B cell (primary cell): ENCODE measurements at regions of chr15 and their contacts with region 1.

Region 1: DNA sequence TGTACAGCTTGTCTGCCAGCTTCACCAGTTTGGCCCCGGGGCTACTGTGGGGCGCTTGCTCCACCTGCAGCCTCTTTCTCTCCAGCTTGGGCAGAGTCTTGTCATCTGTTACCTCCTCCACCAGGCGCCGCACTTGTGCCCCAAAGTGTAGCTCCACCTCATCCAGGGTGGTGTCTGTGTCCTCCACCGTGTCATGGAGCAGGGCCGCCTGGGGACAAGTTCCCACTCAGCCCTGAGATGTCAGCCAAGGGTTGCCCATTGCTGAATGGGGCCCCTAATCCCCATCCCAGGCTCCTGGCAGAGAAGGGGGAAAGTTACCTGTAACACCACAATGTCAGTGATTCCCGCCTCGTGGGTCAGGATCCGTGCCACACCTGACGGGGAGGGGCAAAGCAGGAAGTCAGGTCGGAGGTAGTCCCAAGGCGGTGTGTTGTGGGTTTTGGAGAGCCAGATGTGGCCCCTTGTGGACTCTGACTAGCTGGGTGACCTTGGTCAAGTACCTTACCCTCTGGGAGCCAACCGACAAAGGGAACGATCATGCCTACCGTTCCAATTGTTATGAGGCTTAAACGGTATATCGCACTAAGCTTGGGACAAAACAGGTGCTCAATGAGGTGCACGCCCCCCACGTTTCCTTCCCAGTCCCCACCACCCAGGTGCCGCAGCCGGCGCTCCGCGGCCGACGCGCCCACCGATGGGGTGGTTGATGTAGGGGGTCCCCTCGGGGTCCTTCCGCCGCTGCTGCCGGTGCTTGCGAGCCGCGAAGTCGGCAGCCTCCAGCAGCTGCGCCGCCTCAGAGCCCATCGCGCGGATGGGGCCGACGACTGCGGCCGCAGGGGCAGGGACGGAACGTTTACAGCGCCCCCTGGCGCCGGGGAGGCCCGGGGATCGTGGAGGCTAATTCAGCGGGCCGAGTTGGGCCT is at the start of gene HDDC3:
- DNase-seq: peak; percentile 92
- ATAC-seq: peak; percentile 52
- H3K4me3 ChIP-seq: peak within 1 kb of the TSS; percentile 72 to 97 (median 86)
- H3K4me3 Mint-ChIP-seq: peak within 1 kb of the TSS; percentile 98
- H3K27ac ChIP-seq: peak within 1 kb of the TSS; percentile 93 to 94
- H3K27ac Mint-ChIP-seq: peak within 1 kb of the TSS; percentile 99
- H3K4me1 ChIP-seq: peaks cover 42 to 64% of the 10 kb centered on the region in 2 donors
- H3K4me1 Mint-ChIP-seq: peaks cover 52% of the 10 kb centered on the region
- H3K27me3 ChIP-seq: no peaks in the 10 kb centered on the region
- H3K27me3 Mint-ChIP-seq: no peaks in the 10 kb centered on the region
- CTCF ChIP-seq: peak; percentile 91
- total RNA-seq, gene HDDC3: 23.4 and 23.9 TPM in 2 replicates

Region 2: DNA sequence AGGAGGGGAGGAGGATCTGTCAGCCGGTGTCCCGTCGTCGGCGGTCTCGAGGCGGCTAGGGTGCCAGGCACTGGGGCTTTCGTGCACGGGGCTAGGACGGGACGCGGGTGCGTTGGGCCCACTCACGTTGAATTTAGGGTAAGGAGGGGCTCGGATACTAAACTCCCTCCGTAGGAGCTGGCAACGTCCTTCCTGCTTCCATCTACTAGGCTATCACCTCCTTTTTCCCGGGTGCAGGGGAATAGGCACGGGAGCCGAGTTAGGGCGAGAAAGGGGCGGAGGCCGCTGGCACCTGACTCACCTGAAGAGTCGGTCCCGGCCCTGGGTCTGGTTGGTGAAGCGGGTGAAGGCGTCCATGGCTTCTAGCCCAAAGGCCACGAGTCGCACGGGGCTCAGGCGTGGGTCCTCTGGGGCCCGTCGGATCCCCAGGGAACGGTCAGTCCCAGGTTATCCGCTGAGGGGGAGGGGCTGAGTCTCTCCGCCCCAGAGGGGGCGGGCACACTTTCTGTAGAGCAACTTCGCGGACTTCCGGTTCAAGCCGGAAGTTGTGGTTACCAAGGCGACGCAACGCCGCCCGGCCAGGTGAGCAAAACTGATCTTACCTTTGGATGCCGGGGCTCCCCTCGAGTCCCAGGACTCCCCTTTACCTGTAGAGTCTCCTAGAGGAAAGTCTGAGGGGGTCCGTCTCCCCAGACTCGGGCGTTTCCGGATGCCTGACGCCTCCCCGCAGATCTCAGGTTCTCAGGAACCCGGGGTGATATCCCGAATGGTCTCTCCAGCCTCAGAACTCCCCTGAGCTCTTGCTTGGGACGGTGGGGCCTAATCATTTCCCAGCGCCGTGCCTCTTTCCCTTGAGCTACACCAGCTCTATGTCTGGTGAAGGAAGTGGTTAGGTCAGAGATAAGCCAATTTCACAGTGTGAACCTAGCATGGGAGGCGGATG is 1241.5 kb before region 1 on chr15 and contains the starts of genes PEX11A and WDR93:
- CTCF ChIA-PET with region 1: no interaction called
- POLR2A ChIA-PET with region 1: no interaction called
- intact Hi-C with region 1: loop called (anchors 10 kb)
- DNase-seq: peak; percentile 86
- ATAC-seq: peak; percentile 95
- H3K4me3 ChIP-seq: peak within 1 kb of the TSS; percentile 69 to 92 (median 86)
- H3K4me3 Mint-ChIP-seq: peak within 1 kb of the TSS; percentile 92
- H3K27ac ChIP-seq: peak within 1 kb of the TSS in 1 of 2 donors; percentile 1
- H3K27ac Mint-ChIP-seq: peak within 1 kb of the TSS; percentile 76
- H3K4me1 ChIP-seq: peaks cover 4 to 12% of the 10 kb centered on the region in 2 donors
- H3K4me1 Mint-ChIP-seq: peaks cover 13% of the 10 kb centered on the region
- H3K27me3 ChIP-seq: no peaks in the 10 kb centered on the region
- H3K27me3 Mint-ChIP-seq: no peaks in the 10 kb centered on the region
- CTCF ChIP-seq: no peak
- total RNA-seq, gene PEX11A: 2.4 and 2.8 TPM in 2 replicates
- total RNA-seq, gene WDR93: 0.12 and 0.29 TPM in 2 replicates

Region 3: GRCh38 chr15:90046911-90047392 is 885.0 kb before region 1 on chr15:
- CTCF ChIA-PET with region 1: no interaction called
- POLR2A ChIA-PET with region 1: no interaction called
- intact Hi-C with region 1: no loop called
- DNase-seq: peak; percentile 79
- ATAC-seq: peak; percentile 89
- H3K4me3 ChIP-seq: peak overlapping the region in 3 of 5 experiments; percentile 3 to 42 (median 15)
- H3K4me3 Mint-ChIP-seq: peak overlapping the region; percentile 66
- H3K27ac ChIP-seq: peak overlapping the region; percentile 84 to 87
- H3K27ac Mint-ChIP-seq: peak overlapping the region; percentile 94
- H3K4me1 ChIP-seq: peaks cover 40 to 55% of the 10 kb centered on the region in 2 donors
- H3K4me1 Mint-ChIP-seq: peaks cover 62% of the 10 kb centered on the region
- H3K27me3 ChIP-seq: no peaks in the 10 kb centered on the region
- H3K27me3 Mint-ChIP-seq: no peaks in the 10 kb centered on the region
- CTCF ChIP-seq: no peak

Region 4: GRCh38 chr15:90191794-90192509 is 740.0 kb before region 1 on chr15:
- CTCF ChIA-PET with region 1: no interaction called
- POLR2A ChIA-PET with region 1: interaction called, 3 read pairs
- intact Hi-C with region 1: loop called (anchors 5 kb)
- DNase-seq: peak; percentile 90
- ATAC-seq: peak; percentile 70
- H3K4me3 ChIP-seq: peak overlapping the region; percentile 45 to 58 (median 53)
- H3K4me3 Mint-ChIP-seq: peak overlapping the region; percentile 87
- H3K27ac ChIP-seq: peak overlapping the region; percentile 88 to 91
- H3K27ac Mint-ChIP-seq: peak overlapping the region; percentile 97
- H3K4me1 ChIP-seq: peaks cover 81 to 96% of the 10 kb centered on the region in 2 donors
- H3K4me1 Mint-ChIP-seq: peaks cover 82% of the 10 kb centered on the region
- H3K27me3 ChIP-seq: no peaks in the 10 kb centered on the region
- H3K27me3 Mint-ChIP-seq: no peaks in the 10 kb centered on the region
- CTCF ChIP-seq: no peak

Region 5: DNA sequence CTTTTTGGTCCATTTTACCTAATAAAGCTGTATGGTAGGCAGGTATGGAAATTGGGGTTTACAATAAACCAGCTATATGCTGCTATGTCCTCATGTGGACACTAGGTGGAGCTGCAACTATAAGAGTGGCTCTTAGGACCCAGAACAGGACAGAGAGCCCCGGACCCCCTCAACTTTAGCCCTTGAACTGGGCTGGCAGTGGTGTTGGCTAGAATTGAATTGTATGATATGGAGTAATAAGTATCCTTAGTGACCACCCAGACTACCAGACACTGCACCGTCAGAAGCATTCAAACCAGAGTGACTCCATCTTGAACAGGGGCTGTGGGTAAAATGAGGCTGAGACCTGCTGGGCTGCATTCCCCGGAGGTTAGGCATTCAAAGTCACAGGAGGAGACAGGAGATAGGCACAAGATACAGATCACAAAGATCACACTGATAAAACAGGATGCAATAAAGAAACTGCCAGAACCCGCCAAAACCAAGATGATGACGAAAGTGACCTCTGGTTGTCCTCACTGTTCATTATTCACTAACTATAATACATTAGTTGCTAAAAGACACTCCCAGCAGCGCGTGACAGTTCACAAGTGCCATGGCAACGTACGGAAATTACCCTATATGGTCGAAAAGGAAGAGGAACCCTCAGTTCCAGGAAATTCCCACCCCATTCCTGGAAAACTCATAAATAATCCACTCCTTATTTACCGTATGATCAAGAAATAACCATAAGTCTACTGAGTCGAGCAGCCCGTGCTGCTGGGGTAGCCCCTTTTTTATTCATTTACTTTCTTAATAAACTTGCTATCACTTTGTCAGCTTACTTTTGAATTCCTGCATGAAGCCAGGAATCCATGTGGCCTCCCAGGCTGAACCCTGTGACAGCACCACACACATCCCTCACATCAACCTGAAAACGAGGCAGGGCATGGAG is 283.6 kb before region 1 on chr15:
- CTCF ChIA-PET with region 1: interaction called, 58 read pairs
- POLR2A ChIA-PET with region 1: no interaction called
- intact Hi-C with region 1: loop called (anchors 1 kb)
- DNase-seq: peak; percentile 81
- ATAC-seq: peak; percentile 92
- H3K4me3 ChIP-seq: no peak overlapping the region
- H3K4me3 Mint-ChIP-seq: peak overlapping the region; percentile 57
- H3K27ac ChIP-seq: no peak overlapping the region
- H3K27ac Mint-ChIP-seq: peak overlapping the region; percentile 34
- H3K4me1 ChIP-seq: peaks cover 7 to 8% of the 10 kb centered on the region in 2 donors
- H3K4me1 Mint-ChIP-seq: peaks cover 9% of the 10 kb centered on the region
- H3K27me3 ChIP-seq: peaks cover 0 to 14% (median 5%) of the 10 kb centered on the region in 4 experiments
- H3K27me3 Mint-ChIP-seq: peaks cover 8% of the 10 kb centered on the region
- CTCF ChIP-seq: peak; percentile 94

Region 6: GRCh38 chr15:90902040-90902839 is 29.8 kb before region 1 on chr15:
- CTCF ChIA-PET with region 1: interaction called, 260 read pairs
- POLR2A ChIA-PET with region 1: interaction called, 66 read pairs
- intact Hi-C with region 1: loop called (anchors 1 kb)
- DNase-seq: peak; percentile 89
- ATAC-seq: peak; percentile 75
- H3K4me3 ChIP-seq: peak overlapping the region; percentile 49 to 74 (median 69)
- H3K4me3 Mint-ChIP-seq: peak overlapping the region; percentile 85
- H3K27ac ChIP-seq: peak overlapping the region; percentile 52 to 66
- H3K27ac Mint-ChIP-seq: peak overlapping the region; percentile 97
- H3K4me1 ChIP-seq: peaks cover 20 to 28% of the 10 kb centered on the region in 2 donors
- H3K4me1 Mint-ChIP-seq: peaks cover 30% of the 10 kb centered on the region
- H3K27me3 ChIP-seq: no peaks in the 10 kb centered on the region
- H3K27me3 Mint-ChIP-seq: no peaks in the 10 kb centered on the region
- CTCF ChIP-seq: peak; percentile 80

Region 7: DNA sequence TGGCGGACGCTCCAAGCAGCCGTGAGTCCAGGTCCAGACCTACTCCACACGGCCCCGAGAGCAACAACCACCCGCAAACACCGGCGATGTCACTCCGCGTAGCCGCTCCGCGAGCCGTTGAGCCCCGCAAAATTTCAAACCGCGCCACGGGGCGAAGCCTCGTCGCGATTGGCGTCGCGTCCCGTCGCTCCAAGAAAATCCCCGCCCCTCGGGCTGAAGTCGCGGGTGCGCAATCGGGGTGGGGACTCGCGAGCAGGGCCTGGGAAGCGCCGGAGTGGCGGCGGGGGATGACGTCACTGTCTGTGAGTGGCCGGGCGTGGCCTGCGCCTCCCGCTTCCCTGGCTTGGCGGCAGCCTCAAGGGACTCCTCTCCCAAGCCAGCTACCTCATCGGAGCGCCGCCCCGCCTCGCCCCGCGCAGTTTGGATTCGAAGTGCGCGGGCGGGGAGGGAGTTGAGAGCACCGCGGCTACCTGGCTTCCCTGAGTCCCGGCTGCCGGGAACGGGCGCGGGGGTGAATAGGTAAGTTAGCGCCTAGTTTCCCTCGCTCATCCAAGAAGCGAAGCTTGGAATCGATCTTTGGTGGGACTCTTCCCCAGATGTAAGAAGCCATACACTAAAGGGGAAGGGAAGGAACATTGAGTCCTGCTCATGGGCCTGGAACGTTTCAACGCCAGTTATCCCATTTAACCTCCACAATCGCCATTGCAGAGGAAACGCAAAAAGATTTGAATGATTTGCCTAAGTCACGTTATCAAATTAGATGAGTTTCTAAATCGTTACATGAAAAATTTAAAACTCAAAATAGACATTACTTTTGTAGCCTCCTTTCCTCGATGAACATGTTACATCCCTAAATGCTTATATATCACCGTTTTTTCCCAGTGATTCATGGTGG is 62.7 kb after region 1 on chr15 and contains the start of gene PRC1:
- CTCF ChIA-PET with region 1: interaction called, 6 read pairs
- POLR2A ChIA-PET with region 1: interaction called, 4 read pairs
- intact Hi-C with region 1: loop called (anchors 2 kb)
- DNase-seq: peak; percentile 97
- ATAC-seq: peak; percentile 97
- H3K4me3 ChIP-seq: peak within 1 kb of the TSS; percentile 61 to 93 (median 85)
- H3K4me3 Mint-ChIP-seq: peak within 1 kb of the TSS; percentile 99
- H3K27ac ChIP-seq: peak within 1 kb of the TSS; percentile 81 to 90
- H3K27ac Mint-ChIP-seq: peak within 1 kb of the TSS; percentile 96
- H3K4me1 ChIP-seq: peaks cover 10 to 14% of the 10 kb centered on the region in 2 donors
- H3K4me1 Mint-ChIP-seq: peaks cover 20% of the 10 kb centered on the region
- H3K27me3 ChIP-seq: no peaks in the 10 kb centered on the region
- H3K27me3 Mint-ChIP-seq: no peaks in the 10 kb centered on the region
- CTCF ChIP-seq: no peak
- total RNA-seq, gene PRC1: 8.1 and 11.6 TPM in 2 replicates

Region 8: DNA sequence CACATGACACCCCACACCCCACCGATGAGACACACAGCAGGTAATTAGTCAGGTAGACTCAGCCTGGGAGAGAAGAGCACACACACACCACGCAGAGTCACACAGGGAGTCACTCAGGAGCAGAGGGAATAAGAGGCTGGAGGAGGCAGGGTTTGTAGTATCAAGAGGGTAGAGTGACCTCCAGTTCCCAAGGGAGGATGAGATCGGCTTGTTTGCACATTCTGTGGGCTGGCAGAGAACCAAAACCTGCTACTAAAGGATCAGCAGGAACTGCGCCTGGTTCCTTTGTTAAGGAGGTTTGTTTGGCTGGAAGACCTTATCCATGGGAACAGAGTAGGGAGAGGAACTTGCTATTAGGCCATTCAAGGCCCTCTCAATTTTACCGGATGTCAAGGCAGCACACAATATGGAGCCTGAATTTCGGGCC is 640.1 kb after region 1 on chr15:
- CTCF ChIA-PET with region 1: no interaction called
- POLR2A ChIA-PET with region 1: no interaction called
- intact Hi-C with region 1: no loop called
- DNase-seq: no peak
- ATAC-seq: no peak
- H3K4me3 ChIP-seq: no peak overlapping the region
- H3K4me3 Mint-ChIP-seq: no peak overlapping the region
- H3K27ac ChIP-seq: no peak overlapping the region
- H3K27ac Mint-ChIP-seq: no peak overlapping the region
- H3K4me1 ChIP-seq: no peaks in the 10 kb centered on the region
- H3K4me1 Mint-ChIP-seq: no peaks in the 10 kb centered on the region
- H3K27me3 ChIP-seq: peaks cover 0 to 4% (median 0%) of the 10 kb centered on the region in 4 experiments
- H3K27me3 Mint-ChIP-seq: peaks cover 9% of the 10 kb centered on the region
- CTCF ChIP-seq: no peak

Region 9: GRCh38 chr15:91620229-91620628 is 688.2 kb after region 1 on chr15:
- CTCF ChIA-PET with region 1: no interaction called
- POLR2A ChIA-PET with region 1: no interaction called
- intact Hi-C with region 1: no loop called
- DNase-seq: no peak
- ATAC-seq: no peak
- H3K4me3 ChIP-seq: no peak overlapping the region
- H3K4me3 Mint-ChIP-seq: no peak overlapping the region
- H3K27ac ChIP-seq: no peak overlapping the region
- H3K27ac Mint-ChIP-seq: no peak overlapping the region
- H3K4me1 ChIP-seq: no peaks in the 10 kb centered on the region
- H3K4me1 Mint-ChIP-seq: no peaks in the 10 kb centered on the region
- H3K27me3 ChIP-seq: peaks cover 0 to 1% (median 0%) of the 10 kb centered on the region in 4 experiments
- H3K27me3 Mint-ChIP-seq: no peaks in the 10 kb centered on the region
- CTCF ChIP-seq: no peak